ENCODE measurements at regions of chr14 and their contacts with region 1.

Region 1: GRCh38 chr14:54366736-54367735 is 29.8 kb upstream of the CDKN3 start:
- DNase-seq: peak; percentile 73 to 78
- H3K4me3 ChIP-seq: 0 out of 2 replicates have a peak overlapping the region, but pooled peaks have one; percentile 2
- H3K4me3 Mint-ChIP-seq: peak overlapping the region; percentile 73
- H3K27ac Mint-ChIP-seq: peak overlapping the region; percentile 90
- H3K4me1 ChIP-seq: peaks cover 20% of the 10 kb centered on the region
- H3K4me1 Mint-ChIP-seq: peaks cover 23% of the 10 kb centered on the region
- H3K27me3 ChIP-seq: no peaks in the 10 kb centered on the region
- H3K27me3 Mint-ChIP-seq: no peaks in the 10 kb centered on the region
- CTCF ChIP-seq: peak; percentile 50 to 88

Region 2: DNA sequence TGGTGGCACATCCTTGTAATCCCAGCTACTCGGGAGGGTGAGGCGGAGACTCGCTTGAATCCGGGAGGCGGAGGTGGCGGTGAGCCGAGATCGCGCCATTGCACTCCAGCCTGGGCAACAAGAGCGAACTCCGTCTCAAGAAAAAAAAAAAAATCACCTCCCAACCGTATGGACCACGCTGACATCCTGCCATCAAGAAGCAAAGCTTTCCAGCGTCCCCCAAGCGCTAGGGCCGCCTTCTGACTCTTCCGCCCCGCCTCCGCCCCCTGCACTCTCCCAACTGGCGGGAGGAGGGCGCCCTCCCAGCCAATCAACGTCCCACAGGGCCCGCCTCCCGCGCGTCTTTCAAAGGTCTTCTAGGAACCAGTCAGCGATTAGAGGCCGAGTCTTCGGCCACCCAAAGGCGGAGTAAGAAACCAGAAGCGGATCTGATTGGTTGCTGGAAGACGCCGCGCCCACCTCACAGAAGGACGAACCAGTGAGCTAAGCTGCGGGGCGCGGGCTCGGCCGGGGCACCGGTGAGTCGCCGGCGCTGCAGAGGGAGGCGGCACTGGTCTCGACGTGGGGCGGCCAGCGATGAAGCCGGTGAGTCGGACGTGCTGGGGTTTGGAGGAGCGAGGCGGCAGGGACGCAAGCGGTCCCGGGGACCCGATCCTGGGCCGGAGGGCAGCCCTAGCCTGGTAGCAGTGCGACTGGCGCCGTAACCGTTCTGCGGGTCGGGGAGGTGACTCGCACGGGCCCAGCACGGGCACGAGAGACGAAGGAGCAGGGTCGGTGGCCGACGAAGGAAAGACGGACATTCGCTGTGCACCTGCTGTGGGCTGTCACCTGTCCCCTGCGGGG is 29.7 kb after region 1 on chr14 and contains the start of gene CDKN3:
- CTCF ChIA-PET with region 1: interaction called, 30 read pairs
- POLR2A ChIA-PET with region 1: interaction called, 12 read pairs
- intact Hi-C with region 1: loop called (anchors 1 kb)
- DNase-seq: peak; percentile 98 to 99
- H3K4me3 ChIP-seq: peak within 1 kb of the TSS; percentile 72
- H3K4me3 Mint-ChIP-seq: peak within 1 kb of the TSS; percentile 82
- H3K27ac Mint-ChIP-seq: peak within 1 kb of the TSS; percentile 83
- H3K4me1 ChIP-seq: peaks cover 9% of the 10 kb centered on the region
- H3K4me1 Mint-ChIP-seq: peaks cover 15% of the 10 kb centered on the region
- H3K27me3 ChIP-seq: no peaks in the 10 kb centered on the region
- H3K27me3 Mint-ChIP-seq: no peaks in the 10 kb centered on the region
- CTCF ChIP-seq: peak; percentile 45 to 59
- total RNA-seq, gene CDKN3: 64.9 and 83.0 TPM in 2 replicates

Region 3: DNA sequence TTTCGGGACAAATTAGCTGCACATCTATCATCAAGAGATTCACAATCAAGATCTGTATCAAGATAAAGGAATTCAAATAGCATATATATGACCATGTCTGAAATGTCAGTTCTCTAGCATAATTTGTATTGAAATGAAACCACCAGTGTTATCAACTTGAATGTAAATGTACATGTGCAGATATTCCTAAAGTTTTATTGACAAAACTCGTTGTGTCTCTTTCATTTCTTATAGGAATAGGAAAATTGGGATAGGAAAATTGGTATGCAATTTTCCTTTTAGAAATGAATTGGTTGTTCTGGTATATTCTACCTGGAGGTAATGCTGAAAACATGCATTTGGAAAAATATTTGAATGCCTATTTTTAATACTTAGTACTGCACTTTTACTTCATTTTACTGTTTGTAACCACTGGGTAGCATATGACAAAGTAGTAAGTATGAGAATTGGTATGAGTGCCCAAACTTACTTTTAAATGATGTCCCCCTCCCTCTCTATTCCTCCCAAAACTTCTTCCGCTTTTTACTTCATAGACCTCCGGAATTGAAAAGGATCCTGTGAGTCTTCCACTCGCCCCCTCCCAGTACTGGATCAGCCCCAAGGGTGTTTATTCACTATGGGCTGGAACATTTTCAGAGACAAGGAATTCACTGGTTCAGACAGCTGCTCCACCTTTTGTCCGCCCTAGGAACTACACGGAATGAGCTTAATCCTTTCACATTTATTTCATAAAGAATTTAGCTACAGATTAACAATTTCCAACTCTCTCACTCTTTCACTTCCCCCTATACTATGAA is 53.2 kb after region 1 on chr14:
- CTCF ChIA-PET with region 1: interaction called, 74 read pairs
- POLR2A ChIA-PET with region 1: interaction called, 4 read pairs
- intact Hi-C with region 1: loop called (anchors 1 kb)
- DNase-seq: peak; percentile 59 to 66
- H3K4me3 ChIP-seq: no peak overlapping the region
- H3K4me3 Mint-ChIP-seq: no peak overlapping the region
- H3K27ac Mint-ChIP-seq: no peak overlapping the region
- H3K4me1 ChIP-seq: no peaks in the 10 kb centered on the region
- H3K4me1 Mint-ChIP-seq: peaks cover 9% of the 10 kb centered on the region
- H3K27me3 ChIP-seq: no peaks in the 10 kb centered on the region
- H3K27me3 Mint-ChIP-seq: no peaks in the 10 kb centered on the region
- CTCF ChIP-seq: peak; percentile 48 to 67

Region 4: DNA sequence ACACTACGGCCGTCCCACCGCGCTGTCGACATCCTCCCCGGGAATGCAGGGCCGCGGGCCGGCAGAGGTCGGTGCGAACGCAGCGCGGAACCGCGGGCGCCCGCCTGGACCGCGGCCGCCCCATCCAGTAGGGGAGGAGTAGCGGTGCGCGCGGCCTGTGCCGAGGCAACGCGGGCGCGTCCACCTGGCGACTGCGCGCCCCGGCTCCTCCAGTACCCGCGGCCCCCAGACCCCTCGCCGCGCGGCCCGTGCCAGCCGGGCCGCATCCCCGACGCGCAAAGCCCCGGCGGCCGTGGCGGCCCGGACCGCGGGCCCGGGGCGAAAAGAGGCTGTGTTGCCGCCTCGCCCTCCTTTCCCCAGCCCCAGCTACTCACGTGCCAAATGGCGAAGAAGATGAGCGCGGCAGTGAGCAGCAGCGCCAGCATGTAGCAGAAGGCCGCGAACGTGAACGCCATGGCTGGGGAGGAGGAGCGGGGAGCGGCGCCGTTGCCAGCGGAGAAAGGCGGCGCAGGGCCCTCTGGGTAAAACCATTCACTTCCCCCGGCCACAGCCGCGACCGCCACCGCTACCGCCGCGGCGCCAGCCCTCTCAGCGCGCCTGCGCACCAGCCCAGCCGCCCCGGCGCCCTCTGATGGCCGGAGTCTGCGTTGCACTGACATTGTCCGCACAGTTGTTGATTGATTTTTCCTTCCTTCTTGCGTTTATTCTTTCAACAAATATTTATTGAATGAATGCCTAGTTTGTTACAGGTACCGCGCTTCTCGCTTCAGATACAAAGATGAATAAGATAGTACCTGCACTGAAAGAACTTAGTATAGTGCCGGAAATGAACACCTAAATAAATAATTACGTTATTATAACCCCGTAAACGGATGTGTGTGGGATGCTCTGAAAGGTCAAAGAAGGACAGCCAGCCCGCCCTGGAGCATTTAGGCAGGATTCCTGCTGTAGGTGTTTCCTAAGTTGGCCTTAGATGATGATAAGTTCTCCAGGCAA is 74.1 kb after region 1 on chr14 and contains the start of gene CNIH1:
- CTCF ChIA-PET with region 1: interaction called, 3 read pairs
- POLR2A ChIA-PET with region 1: no interaction called
- intact Hi-C with region 1: loop called (anchors 1 kb)
- DNase-seq: peak; percentile 92 to 96
- H3K4me3 ChIP-seq: peak within 1 kb of the TSS; percentile 91
- H3K4me3 Mint-ChIP-seq: peak within 1 kb of the TSS; percentile 83
- H3K27ac Mint-ChIP-seq: peak within 1 kb of the TSS; percentile 90
- H3K4me1 ChIP-seq: peaks cover 6% of the 10 kb centered on the region; the same call in 1 of the 2 replicates
- H3K4me1 Mint-ChIP-seq: peaks cover 7% of the 10 kb centered on the region
- H3K27me3 ChIP-seq: no peaks in the 10 kb centered on the region
- H3K27me3 Mint-ChIP-seq: no peaks in the 10 kb centered on the region
- CTCF ChIP-seq: peak; percentile 76 to 89
- total RNA-seq, gene CNIH1: 159 and 164 TPM in 2 replicates

Region 5: GRCh38 chr14:54488646-54489317 is 121.7 kb after region 1 on chr14 and contains the start of gene GMFB:
- CTCF ChIA-PET with region 1: interaction called, 5 read pairs
- POLR2A ChIA-PET with region 1: interaction called, 4 read pairs
- intact Hi-C with region 1: loop called (anchors 1 kb)
- DNase-seq: peak; percentile 92
- H3K4me3 ChIP-seq: peak within 1 kb of the TSS; percentile 86
- H3K4me3 Mint-ChIP-seq: peak within 1 kb of the TSS; percentile 74
- H3K27ac Mint-ChIP-seq: peak within 1 kb of the TSS; percentile 78
- H3K4me1 ChIP-seq: peaks cover 24% of the 10 kb centered on the region
- H3K4me1 Mint-ChIP-seq: peaks cover 18% of the 10 kb centered on the region
- H3K27me3 ChIP-seq: no peaks in the 10 kb centered on the region
- H3K27me3 Mint-ChIP-seq: no peaks in the 10 kb centered on the region
- CTCF ChIP-seq: peak in 1 of 2 experiments; percentile 57
- total RNA-seq, gene GMFB: 65.5 and 67.4 TPM in 2 replicates